ENCODE measurements at regions of chr7 and their contacts with region 1.

Region 1: GRCh38 chr7:151368136-151368571 is 26.5 kb downstream of the NUB1 start:
- DNase-seq: peak; percentile 62
- H3K4me3 ChIP-seq: no peak overlapping the region
- CTCF ChIP-seq: peak; percentile 93

Region 2: GRCh38 chr7:151448261-151449252 is 80.4 kb after region 1 on chr7:
- in situ Hi-C with region 1: loop called (anchors 5 kb)
- DNase-seq: no peak
- H3K4me3 ChIP-seq: peak overlapping the region; percentile 27
- CTCF ChIP-seq: peak; percentile 81

Region 3: DNA sequence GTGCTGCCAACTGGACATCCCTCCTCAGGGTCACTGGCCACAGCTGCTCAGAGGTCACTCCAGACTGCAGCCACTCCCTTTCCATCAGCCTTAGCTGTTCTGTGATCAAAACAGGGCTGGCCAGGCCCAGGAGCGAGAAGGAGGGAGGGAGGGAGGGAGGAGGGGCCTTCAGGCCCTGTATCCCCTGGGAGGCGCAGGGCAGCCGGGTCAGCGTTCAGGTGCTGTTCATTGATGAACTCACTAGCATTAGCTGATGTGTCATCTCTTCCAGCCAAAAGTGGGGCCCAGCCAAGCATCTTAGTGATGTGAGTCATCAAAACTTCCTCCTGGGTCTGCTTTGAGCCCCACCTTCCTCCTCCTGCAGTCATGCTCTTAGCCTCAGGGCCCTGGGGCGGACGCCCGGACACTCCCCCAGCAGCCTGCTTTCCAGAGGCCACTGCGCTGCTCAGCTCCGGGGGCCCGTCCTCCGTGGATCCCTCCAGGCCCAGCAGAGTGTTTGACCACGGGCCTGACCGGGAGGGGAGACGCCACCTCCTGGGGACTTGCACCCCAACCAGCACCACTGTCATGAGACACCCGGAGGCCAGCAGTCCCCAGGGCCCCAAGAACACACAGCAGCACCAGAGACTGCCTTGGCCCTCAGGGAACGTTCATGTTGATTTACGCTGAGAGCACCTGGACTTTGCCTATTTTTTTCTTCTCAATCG is 359.6 kb after region 1 on chr7:
- in situ Hi-C with region 1: loop called (anchors 25 kb)
- DNase-seq: peak; percentile 83
- H3K4me3 ChIP-seq: no peak overlapping the region
- CTCF ChIP-seq: no peak

Measured in astrocyte of the cerebellum (primary cell).